ENCODE measurements at regions of chr10 and their contacts with region 1.

Region 1: GRCh38 chr10:89369156-89370105 is 8.4 kb upstream of the IFIT1B start:
- DNase-seq: no peak
- ATAC-seq: peak; percentile 73
- H3K4me3 Mint-ChIP-seq: no peak overlapping the region
- H3K27ac Mint-ChIP-seq: no peak overlapping the region
- H3K4me1 Mint-ChIP-seq: peaks cover 14% of the 10 kb centered on the region
- H3K27me3 Mint-ChIP-seq: no peaks in the 10 kb centered on the region
- CTCF ChIP-seq: no peak

Region 2: GRCh38 chr10:89163265-89163995 is 206.0 kb before region 1 on chr10:
- CTCF ChIA-PET with region 1: no interaction called
- POLR2A ChIA-PET with region 1: no interaction called
- DNase-seq: no peak
- ATAC-seq: no peak
- H3K4me3 Mint-ChIP-seq: no peak overlapping the region
- H3K27ac Mint-ChIP-seq: no peak overlapping the region
- H3K4me1 Mint-ChIP-seq: no peaks in the 10 kb centered on the region
- H3K27me3 Mint-ChIP-seq: no peaks in the 10 kb centered on the region
- CTCF ChIP-seq: no peak

Region 3: DNA sequence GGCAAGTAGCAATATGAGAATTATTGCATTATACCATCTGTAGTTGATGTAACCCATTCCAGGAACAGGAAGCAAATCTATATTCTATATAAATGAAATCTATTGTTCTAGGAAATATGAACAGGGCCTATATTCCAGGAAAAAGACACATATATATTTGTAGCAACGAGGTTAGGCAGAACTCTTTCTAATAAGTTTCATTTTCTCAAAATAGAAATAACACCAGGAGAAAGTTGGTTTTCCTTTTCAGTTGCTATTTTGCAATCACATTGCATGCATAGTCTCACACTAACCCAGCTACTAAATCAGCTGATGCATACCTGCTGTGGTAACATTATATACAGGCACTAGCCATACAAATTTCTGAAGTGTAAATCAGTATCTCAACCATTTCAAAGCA is 73.8 kb before region 1 on chr10:
- CTCF ChIA-PET with region 1: interaction called, 10 read pairs
- POLR2A ChIA-PET with region 1: no interaction called
- DNase-seq: no peak
- ATAC-seq: no peak
- H3K4me3 Mint-ChIP-seq: no peak overlapping the region
- H3K27ac Mint-ChIP-seq: no peak overlapping the region
- H3K4me1 Mint-ChIP-seq: no peaks in the 10 kb centered on the region
- H3K27me3 Mint-ChIP-seq: no peaks in the 10 kb centered on the region
- CTCF ChIP-seq: no peak

Region 4: DNA sequence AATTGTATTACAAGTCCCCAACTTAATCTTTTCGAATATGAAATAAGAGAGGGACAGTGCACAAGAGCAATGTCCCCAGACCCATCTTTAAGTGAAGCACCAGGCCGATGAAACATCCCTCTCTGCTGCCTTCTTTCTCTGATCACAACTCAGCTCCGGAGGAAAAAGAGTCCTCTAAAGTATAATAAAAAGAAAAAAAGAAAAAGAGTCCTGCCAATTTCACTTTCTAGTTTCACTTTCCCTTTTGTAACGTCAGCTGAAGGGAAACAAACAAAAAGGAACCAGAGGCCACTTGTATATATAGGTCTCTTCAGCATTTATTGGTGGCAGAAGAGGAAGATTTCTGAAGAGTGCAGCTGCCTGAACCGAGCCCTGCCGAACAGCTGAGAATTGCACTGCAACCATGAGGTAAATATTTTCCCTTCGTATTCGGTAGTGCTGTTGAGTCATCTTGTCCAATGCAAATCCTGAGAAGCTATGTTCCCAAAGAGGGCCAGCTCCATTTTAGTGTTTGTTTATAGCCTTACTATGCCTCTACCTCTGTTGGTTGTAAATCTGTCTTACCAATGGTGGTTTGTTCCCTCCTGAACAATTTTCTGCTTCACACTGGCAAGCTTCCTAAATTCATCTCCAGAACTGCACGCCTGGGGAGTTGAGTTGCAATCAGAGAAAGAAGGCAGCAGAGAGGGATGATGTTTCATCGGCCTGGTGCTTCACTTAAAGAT is 67.5 kb before region 1 on chr10 and contains the start of gene IFIT2:
- CTCF ChIA-PET with region 1: interaction called, 11 read pairs
- POLR2A ChIA-PET with region 1: interaction called, 3 read pairs
- DNase-seq: no peak
- ATAC-seq: no peak
- H3K4me3 Mint-ChIP-seq: no peak within 1 kb of the TSS
- H3K27ac Mint-ChIP-seq: 0 out of 2 replicates have a peak within 1 kb of the TSS, but pooled peaks have one; percentile 39
- H3K4me1 Mint-ChIP-seq: peaks cover 16% of the 10 kb centered on the region
- H3K27me3 Mint-ChIP-seq: no peaks in the 10 kb centered on the region
- CTCF ChIP-seq: no peak
- total RNA-seq, gene IFIT2: 0.07 to 0.15 TPM (median 0.14 TPM) in 3 replicates

Region 5: GRCh38 chr10:89327784-89328441 is 41.5 kb before region 1 on chr10 and contains the start of gene IFIT3:
- CTCF ChIA-PET with region 1: interaction called, 10 read pairs
- POLR2A ChIA-PET with region 1: no interaction called
- DNase-seq: no peak
- ATAC-seq: peak; percentile 70
- H3K4me3 Mint-ChIP-seq: peak within 1 kb of the TSS; percentile 41
- H3K27ac Mint-ChIP-seq: peak within 1 kb of the TSS; percentile 100
- H3K4me1 Mint-ChIP-seq: peaks cover 48% of the 10 kb centered on the region
- H3K27me3 Mint-ChIP-seq: no peaks in the 10 kb centered on the region
- CTCF ChIP-seq: no peak
- total RNA-seq, gene IFIT3: 0.14 to 0.42 TPM (median 0.39 TPM) in 3 replicates

Region 6: GRCh38 chr10:89389254-89389653 is 19.8 kb after region 1 on chr10:
- CTCF ChIA-PET with region 1: interaction called, 11 read pairs
- POLR2A ChIA-PET with region 1: no interaction called
- DNase-seq: no peak
- ATAC-seq: peak; percentile 67
- H3K4me3 Mint-ChIP-seq: no peak overlapping the region
- H3K27ac Mint-ChIP-seq: no peak overlapping the region
- H3K4me1 Mint-ChIP-seq: peaks cover 21% of the 10 kb centered on the region
- H3K27me3 Mint-ChIP-seq: no peaks in the 10 kb centered on the region
- CTCF ChIP-seq: no peak

Measured in WTC11 (cell line).